ENCODE measurements at regions of chr1 and their contacts with region 1.

Region 1: DNA sequence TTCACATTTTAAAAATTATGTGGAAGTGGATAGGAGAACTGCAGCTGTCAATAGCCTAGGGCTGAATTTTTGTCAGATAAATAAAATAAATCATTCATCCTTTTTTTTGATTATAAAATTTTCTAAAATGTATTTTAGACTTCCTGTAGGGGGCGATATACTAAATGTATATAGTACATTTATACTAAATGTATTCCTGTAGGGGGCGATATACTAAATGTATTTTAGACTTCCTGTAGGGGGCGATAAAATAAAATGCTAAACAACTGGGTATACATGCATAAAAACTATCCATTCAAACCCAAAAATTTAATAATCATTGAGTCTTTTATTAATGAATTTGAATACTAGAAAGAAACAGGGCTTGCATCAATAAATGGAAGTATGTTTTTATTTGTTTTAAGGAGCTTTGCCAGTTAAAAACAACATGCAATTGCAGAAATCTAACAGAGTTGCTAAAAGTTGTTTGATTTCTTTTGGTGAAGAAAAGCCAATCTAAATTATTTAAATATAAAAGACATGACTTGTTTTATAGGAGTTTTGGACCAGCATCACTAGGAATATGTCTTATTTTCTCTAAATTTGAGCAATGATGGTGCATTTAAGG is 31.4 kb downstream of the CLCA1 start:
- DNase-seq: peak; percentile 32
- ATAC-seq: no peak
- H3K4me3 ChIP-seq: no peak overlapping the region
- H3K27ac ChIP-seq: no peak overlapping the region
- H3K4me1 ChIP-seq: 0 out of 2 replicates have a peak, but pooled peaks cover 6% of the 10 kb centered on the region
- H3K27me3 ChIP-seq: peaks cover 5 to 28% of the 10 kb centered on the region in 2 experiments; a peak in 4 of 5 replicates
- CTCF ChIP-seq: peak; percentile 44
- EP300 ChIP-seq: no peak
- POLR2A ChIP-seq: no peak
- RAD21 ChIP-seq: no peak

Region 2: GRCh38 chr1:86380257-86380861 is 119.7 kb before region 1 on chr1:
- CTCF ChIA-PET with region 1: interaction called, 16 read pairs
- POLR2A ChIA-PET with region 1: no interaction called
- in situ Hi-C with region 1: loop called (anchors 10 kb)
- intact Hi-C with region 1: loop called (anchors 2 kb)
- DNase-seq: peak; percentile 55
- ATAC-seq: peak; percentile 69
- H3K4me3 ChIP-seq: no peak overlapping the region
- H3K27ac ChIP-seq: no peak overlapping the region
- H3K4me1 ChIP-seq: no peaks in the 10 kb centered on the region
- H3K27me3 ChIP-seq: no peaks in the 10 kb centered on the region
- CTCF ChIP-seq: peak; percentile 74
- EP300 ChIP-seq: no peak
- POLR2A ChIP-seq: no peak
- RAD21 ChIP-seq: peak; percentile 44; the same call in 1 of the 2 replicates

Region 3: DNA sequence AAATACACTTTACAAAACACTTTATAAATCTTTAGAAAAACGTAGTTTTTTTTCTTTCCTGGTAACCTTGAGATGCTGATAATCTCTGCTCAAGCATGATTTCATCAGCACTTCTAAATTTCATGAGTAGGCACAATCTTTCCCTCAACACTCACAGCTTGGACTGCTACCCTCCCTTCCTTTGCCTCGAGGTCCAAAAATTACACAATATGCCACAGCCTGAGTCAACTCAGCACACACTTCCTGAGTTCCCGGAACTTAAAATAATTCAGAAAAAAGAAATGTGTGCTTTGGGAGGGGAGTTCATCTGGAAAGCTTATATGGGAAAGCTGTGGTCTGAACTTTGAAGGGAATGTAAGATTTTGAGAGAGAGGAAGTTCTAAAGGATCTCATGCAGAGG is 70.3 kb before region 1 on chr1:
- CTCF ChIA-PET with region 1: no interaction called
- POLR2A ChIA-PET with region 1: no interaction called
- in situ Hi-C with region 1: no loop called
- intact Hi-C with region 1: loop called (anchors 2 kb)
- DNase-seq: no peak
- ATAC-seq: no peak; the same call in 2 of the 3 replicates
- H3K4me3 ChIP-seq: no peak overlapping the region
- H3K27ac ChIP-seq: no peak overlapping the region
- H3K4me1 ChIP-seq: no peaks in the 10 kb centered on the region
- H3K27me3 ChIP-seq: no peaks in the 10 kb centered on the region; a peak in 1 of 5 replicates
- CTCF ChIP-seq: no peak
- EP300 ChIP-seq: no peak
- POLR2A ChIP-seq: no peak
- RAD21 ChIP-seq: no peak

Region 4: GRCh38 chr1:86470859-86471258 is 29.2 kb before region 1 on chr1:
- CTCF ChIA-PET with region 1: interaction called, 18 read pairs
- POLR2A ChIA-PET with region 1: no interaction called
- in situ Hi-C with region 1: no loop called
- intact Hi-C with region 1: loop called (anchors 1 kb)
- DNase-seq: no peak
- ATAC-seq: no peak
- H3K4me3 ChIP-seq: no peak overlapping the region
- H3K27ac ChIP-seq: no peak overlapping the region
- H3K4me1 ChIP-seq: no peaks in the 10 kb centered on the region
- H3K27me3 ChIP-seq: no peaks in the 10 kb centered on the region; a peak in 1 of 5 replicates
- CTCF ChIP-seq: no peak
- EP300 ChIP-seq: no peak
- POLR2A ChIP-seq: no peak
- RAD21 ChIP-seq: no peak

Region 5: GRCh38 chr1:86552366-86552765 is 52.3 kb after region 1 on chr1:
- CTCF ChIA-PET with region 1: no interaction called
- POLR2A ChIA-PET with region 1: no interaction called
- in situ Hi-C with region 1: no loop called
- intact Hi-C with region 1: no loop called
- DNase-seq: no peak
- ATAC-seq: peak; percentile 35
- H3K4me3 ChIP-seq: no peak overlapping the region
- H3K27ac ChIP-seq: no peak overlapping the region
- H3K4me1 ChIP-seq: no peaks in the 10 kb centered on the region
- H3K27me3 ChIP-seq: peaks cover 0 to 3% of the 10 kb centered on the region in 2 experiments; a peak in 2 of 5 replicates
- CTCF ChIP-seq: no peak
- EP300 ChIP-seq: no peak
- POLR2A ChIP-seq: no peak
- RAD21 ChIP-seq: no peak

Region 6: GRCh38 chr1:86687595-86687994 is 187.5 kb after region 1 on chr1:
- CTCF ChIA-PET with region 1: interaction called, 8 read pairs
- POLR2A ChIA-PET with region 1: no interaction called
- in situ Hi-C with region 1: loop called (anchors 25 kb)
- intact Hi-C with region 1: loop called (anchors 5 kb)
- DNase-seq: no peak
- ATAC-seq: no peak
- H3K4me3 ChIP-seq: no peak overlapping the region
- H3K27ac ChIP-seq: no peak overlapping the region
- H3K4me1 ChIP-seq: no peaks in the 10 kb centered on the region
- H3K27me3 ChIP-seq: no peaks in the 10 kb centered on the region; a peak in 2 of 5 replicates
- CTCF ChIP-seq: no peak
- EP300 ChIP-seq: no peak
- POLR2A ChIP-seq: no peak
- RAD21 ChIP-seq: no peak

Region 7: GRCh38 chr1:86741947-86742572 is 242.0 kb after region 1 on chr1:
- CTCF ChIA-PET with region 1: interaction called, 12 read pairs
- POLR2A ChIA-PET with region 1: no interaction called
- in situ Hi-C with region 1: no loop called
- intact Hi-C with region 1: no loop called
- DNase-seq: peak; percentile 13
- ATAC-seq: no peak
- H3K4me3 ChIP-seq: no peak overlapping the region
- H3K27ac ChIP-seq: no peak overlapping the region
- H3K4me1 ChIP-seq: peaks cover 9% of the 10 kb centered on the region
- H3K27me3 ChIP-seq: no peaks in the 10 kb centered on the region
- CTCF ChIP-seq: peak; percentile 32
- EP300 ChIP-seq: no peak
- POLR2A ChIP-seq: no peak
- RAD21 ChIP-seq: peak; percentile 10; the same call in 1 of the 2 replicates

Region 8: GRCh38 chr1:86965012-86965826 is 465.1 kb after region 1 on chr1:
- CTCF ChIA-PET with region 1: no interaction called
- POLR2A ChIA-PET with region 1: no interaction called
- in situ Hi-C with region 1: no loop called
- intact Hi-C with region 1: loop called (anchors 10 kb)
- DNase-seq: peak; percentile 46
- ATAC-seq: peak; percentile 73
- H3K4me3 ChIP-seq: no peak overlapping the region
- H3K27ac ChIP-seq: no peak overlapping the region
- H3K4me1 ChIP-seq: peaks cover 19% of the 10 kb centered on the region
- H3K27me3 ChIP-seq: no peaks in the 10 kb centered on the region
- CTCF ChIP-seq: peak; percentile 66
- EP300 ChIP-seq: no peak
- POLR2A ChIP-seq: no peak
- RAD21 ChIP-seq: peak; percentile 67

Measured in HepG2 (cell line).